ENCODE measurements at regions of chr6 and their contacts with region 1.

Region 1: GRCh38 chr6:4358414-4359114 is 223.2 kb upstream of the ECI2 start:
- DNase-seq: peak; percentile 99
- H3K4me3 ChIP-seq: no peak overlapping the region
- H3K27ac ChIP-seq: peak overlapping the region; percentile 88
- H3K4me1 ChIP-seq: peaks cover 14% of the 10 kb centered on the region
- H3K27me3 ChIP-seq: no peaks in the 10 kb centered on the region
- CTCF ChIP-seq: no peak
- POLR2A ChIP-seq: no peak

Region 2: GRCh38 chr6:3905945-3906845 is 452.4 kb before region 1 on chr6:
- CTCF ChIA-PET with region 1: no interaction called
- POLR2A ChIA-PET with region 1: no interaction called
- dilution Hi-C with region 1: no loop called
- intact Hi-C with region 1: no loop called
- DNase-seq: no peak
- H3K4me3 ChIP-seq: no peak overlapping the region
- H3K27ac ChIP-seq: no peak overlapping the region
- H3K4me1 ChIP-seq: peaks cover 44% of the 10 kb centered on the region
- H3K27me3 ChIP-seq: no peaks in the 10 kb centered on the region
- CTCF ChIP-seq: no peak
- POLR2A ChIP-seq: no peak

Region 3: DNA sequence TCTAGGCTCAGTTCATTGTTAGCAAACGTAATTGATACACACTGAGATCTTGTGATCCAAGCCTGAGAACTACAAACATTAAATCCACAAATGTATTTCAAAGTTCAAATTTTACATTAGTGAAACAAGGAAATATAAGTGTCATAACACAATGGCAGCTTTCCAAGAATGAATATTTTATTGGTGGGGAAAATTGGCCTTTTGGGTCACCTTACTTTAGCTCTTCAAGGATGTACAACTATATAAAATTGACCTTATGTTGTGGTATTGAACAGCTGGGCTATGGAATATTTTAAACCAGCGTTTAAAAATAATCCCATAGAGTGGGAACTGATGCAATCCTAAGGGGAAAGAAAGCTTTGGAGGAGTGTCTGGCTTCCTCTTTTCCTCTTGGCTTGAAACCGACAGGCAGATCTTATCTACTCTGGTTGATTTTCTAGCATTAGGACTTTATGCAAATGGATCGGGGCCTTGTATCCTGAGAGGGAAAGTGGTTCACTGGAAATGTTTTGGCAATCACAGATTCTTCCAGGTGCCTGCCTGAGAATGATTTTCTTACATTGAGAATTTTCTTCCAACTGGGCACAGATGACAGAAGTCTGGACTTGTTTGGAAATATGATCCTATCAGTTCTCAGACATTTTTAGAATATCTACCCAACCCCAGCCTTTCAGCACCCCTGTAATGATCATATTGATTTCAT is 38.4 kb before region 1 on chr6:
- CTCF ChIA-PET with region 1: interaction called, 3 read pairs
- POLR2A ChIA-PET with region 1: no interaction called
- dilution Hi-C with region 1: no loop called
- intact Hi-C with region 1: loop called (anchors 2 kb)
- DNase-seq: peak; percentile 84
- H3K4me3 ChIP-seq: no peak overlapping the region
- H3K27ac ChIP-seq: peak overlapping the region; percentile 38
- H3K4me1 ChIP-seq: peaks cover 30% of the 10 kb centered on the region
- H3K27me3 ChIP-seq: no peaks in the 10 kb centered on the region
- CTCF ChIP-seq: no peak
- POLR2A ChIP-seq: no peak

Region 4: DNA sequence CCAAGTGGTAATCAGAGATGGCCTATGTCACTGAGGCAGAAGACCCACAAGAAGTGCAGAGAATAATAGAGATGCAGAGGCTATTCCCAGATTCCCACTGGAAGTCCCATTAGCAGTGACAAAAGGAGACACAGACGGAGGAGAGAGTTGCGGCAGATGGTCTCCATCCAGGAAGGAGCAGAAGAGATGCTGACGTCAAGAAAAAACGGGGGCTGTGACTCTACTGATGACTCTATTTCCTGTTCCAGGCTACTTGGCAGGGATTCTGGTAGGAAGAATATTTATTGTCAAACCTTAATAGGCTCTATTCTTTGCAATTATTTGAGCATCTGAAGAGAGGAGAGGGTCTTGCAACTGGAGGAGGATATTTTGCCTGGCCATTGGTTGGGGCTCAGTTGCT is 22.8 kb after region 1 on chr6:
- CTCF ChIA-PET with region 1: interaction called, 3 read pairs
- POLR2A ChIA-PET with region 1: no interaction called
- dilution Hi-C with region 1: no loop called
- intact Hi-C with region 1: loop called (anchors 1 kb)
- DNase-seq: peak; percentile 68
- H3K4me3 ChIP-seq: no peak overlapping the region
- H3K27ac ChIP-seq: peak overlapping the region; percentile 64
- H3K4me1 ChIP-seq: peaks cover 15% of the 10 kb centered on the region
- H3K27me3 ChIP-seq: no peaks in the 10 kb centered on the region
- CTCF ChIP-seq: no peak
- POLR2A ChIP-seq: no peak

Region 5: GRCh38 chr6:4581796-4582385 is 223.3 kb after region 1 on chr6:
- CTCF ChIA-PET with region 1: no interaction called
- POLR2A ChIA-PET with region 1: no interaction called
- dilution Hi-C with region 1: no loop called
- intact Hi-C with region 1: loop called (anchors 5 kb)
- DNase-seq: peak; percentile 76
- H3K4me3 ChIP-seq: no peak overlapping the region
- H3K27ac ChIP-seq: peak overlapping the region; percentile 81
- H3K4me1 ChIP-seq: peaks cover 22% of the 10 kb centered on the region
- H3K27me3 ChIP-seq: no peaks in the 10 kb centered on the region
- CTCF ChIP-seq: no peak
- POLR2A ChIP-seq: no peak

Region 6: DNA sequence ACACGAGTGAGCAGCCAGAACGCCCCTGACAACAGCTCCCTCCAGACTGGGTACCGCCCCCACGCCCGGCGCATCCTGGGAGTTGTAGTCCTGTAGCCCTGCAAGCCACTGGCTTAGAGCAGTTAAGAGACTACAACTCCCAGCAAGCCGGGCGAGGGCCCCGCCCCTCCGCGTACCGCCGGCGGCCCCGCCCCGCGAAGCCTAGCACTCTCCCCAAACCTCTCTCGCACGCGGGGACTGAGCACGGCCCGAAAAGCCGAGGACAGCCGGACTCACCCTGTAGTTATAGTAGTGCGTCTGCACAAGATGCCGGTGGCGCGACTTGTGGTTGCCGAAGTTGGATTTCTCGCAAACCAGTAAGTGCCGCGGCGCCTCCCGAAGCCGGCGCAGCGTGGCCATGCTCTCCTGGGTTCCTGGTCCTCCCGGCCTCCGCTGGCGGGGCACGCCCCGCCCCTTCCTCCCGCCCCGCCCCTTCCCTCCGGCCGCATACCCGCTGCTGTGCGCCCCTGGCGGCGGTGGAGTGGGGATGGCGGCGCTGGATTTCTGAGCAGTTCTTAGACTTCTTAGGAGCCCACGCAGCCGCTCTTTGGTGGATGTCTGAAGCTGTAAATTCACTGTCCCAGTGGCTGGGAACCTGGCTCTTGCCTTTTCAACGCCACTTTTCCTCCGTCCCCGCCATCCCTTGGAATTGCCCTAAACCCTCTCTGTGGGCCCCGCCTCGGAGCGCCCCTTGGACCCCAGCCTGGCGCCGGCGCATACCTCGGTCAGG is 645.2 kb after region 1 on chr6 and contains the start of gene RPP40:
- CTCF ChIA-PET with region 1: no interaction called
- POLR2A ChIA-PET with region 1: no interaction called
- dilution Hi-C with region 1: no loop called
- intact Hi-C with region 1: loop called (anchors 1 kb)
- DNase-seq: peak; percentile 98
- H3K4me3 ChIP-seq: peak within 1 kb of the TSS; percentile 51 to 72 (median 63)
- H3K27ac ChIP-seq: peak within 1 kb of the TSS; percentile 79
- H3K4me1 ChIP-seq: peaks cover 7% of the 10 kb centered on the region
- H3K27me3 ChIP-seq: no peaks in the 10 kb centered on the region
- CTCF ChIP-seq: peak; percentile 74 to 85
- POLR2A ChIP-seq: peak; percentile 88
- total RNA-seq, gene RPP40: 12.6 and 15.3 TPM in 2 replicates

Measured in endothelial cell of umbilical vein (primary cell).